ENCODE measurements at regions of chr17 and their contacts with region 1.

Region 1: DNA sequence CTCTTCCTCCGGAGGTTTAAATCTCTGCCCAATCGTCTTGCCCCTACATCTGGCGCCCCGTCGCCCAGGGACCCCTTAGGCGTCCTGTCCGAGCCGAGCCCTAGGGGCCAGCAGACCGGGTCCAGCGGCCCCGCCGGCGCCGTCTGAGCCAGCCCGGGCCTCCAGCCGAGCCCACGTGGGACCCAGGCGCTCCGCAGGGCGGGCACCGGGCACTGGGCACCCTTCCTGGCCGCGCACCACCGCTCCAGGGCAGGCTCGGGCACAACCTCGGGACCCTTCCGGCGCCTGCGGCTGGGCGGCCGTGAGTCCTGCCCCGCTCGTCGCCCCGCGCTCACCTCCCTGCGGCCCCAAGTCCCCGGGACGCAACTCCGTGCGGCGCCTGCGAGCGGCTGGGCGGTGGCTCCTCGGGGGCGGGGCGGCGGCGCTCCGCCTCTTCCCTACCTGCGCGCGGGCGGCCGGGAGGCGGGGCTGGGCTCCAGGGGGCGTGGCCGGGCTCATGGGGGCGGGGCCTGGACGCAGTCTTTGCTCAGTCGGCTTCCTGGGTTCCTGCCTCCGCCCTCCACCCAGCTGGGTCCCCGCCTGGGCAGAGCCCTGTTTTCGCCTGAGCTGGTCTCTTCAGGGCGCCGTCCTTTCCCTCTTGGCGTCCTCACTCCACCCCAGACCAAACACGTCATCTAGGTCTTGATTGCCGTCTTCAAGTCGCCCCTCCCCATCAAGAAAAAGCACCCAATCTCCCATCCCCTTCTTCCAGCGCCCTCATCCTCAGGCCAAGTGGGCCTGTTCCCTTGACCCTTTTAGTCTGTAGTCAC is at the start of gene RHBDF2:
- DNase-seq: no peak
- ATAC-seq: peak; percentile 85
- H3K4me3 ChIP-seq: peak within 1 kb of the TSS; percentile 89
- H3K27ac ChIP-seq: peak within 1 kb of the TSS; percentile 90
- H3K4me1 ChIP-seq: peaks cover 43% of the 10 kb centered on the region
- H3K27me3 ChIP-seq: no peaks in the 10 kb centered on the region
- CTCF ChIP-seq: no peak
- total RNA-seq, gene RHBDF2: 67.8 TPM

Region 2: GRCh38 chr17:76458580-76459490 is 42.4 kb before region 1 on chr17:
- CTCF ChIA-PET with region 1: interaction called, 8 read pairs
- POLR2A ChIA-PET with region 1: interaction called, 15 read pairs
- in situ Hi-C with region 1: no loop called
- intact Hi-C with region 1: loop called (anchors 1 kb)
- DNase-seq: no peak
- ATAC-seq: peak; percentile 95
- H3K4me3 ChIP-seq: no peak overlapping the region
- H3K27ac ChIP-seq: no peak overlapping the region
- H3K4me1 ChIP-seq: no peaks in the 10 kb centered on the region
- H3K27me3 ChIP-seq: no peaks in the 10 kb centered on the region
- CTCF ChIP-seq: peak; percentile 90

Region 3: DNA sequence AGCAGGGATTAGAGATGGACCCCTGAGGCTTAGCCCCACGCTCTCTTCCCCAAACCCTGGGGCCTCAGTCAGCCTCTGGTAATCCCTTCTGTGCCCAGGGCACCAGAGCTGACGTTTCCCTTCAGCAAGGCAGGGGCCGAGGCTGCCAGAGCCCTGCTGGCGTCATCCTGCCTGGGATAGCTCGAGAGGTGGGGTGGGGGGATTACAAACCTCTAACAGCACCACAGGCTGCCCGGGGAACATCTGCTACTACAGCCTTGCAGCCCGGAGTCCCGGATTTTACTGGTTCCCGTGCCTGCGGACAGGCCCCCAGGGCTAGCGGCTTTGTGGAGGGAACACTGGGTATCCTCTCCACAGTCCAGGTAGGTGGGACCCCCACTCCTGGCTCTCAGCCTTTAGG is 33.9 kb before region 1 on chr17 and contains the start of gene AANAT:
- CTCF ChIA-PET with region 1: interaction called, 10 read pairs
- POLR2A ChIA-PET with region 1: interaction called, 3 read pairs
- in situ Hi-C with region 1: no loop called
- intact Hi-C with region 1: loop called (anchors 1 kb)
- DNase-seq: no peak
- ATAC-seq: no peak
- H3K4me3 ChIP-seq: no peak within 1 kb of the TSS
- H3K27ac ChIP-seq: no peak within 1 kb of the TSS
- H3K4me1 ChIP-seq: peaks cover 5% of the 10 kb centered on the region; the same call in 1 of the 2 replicates
- H3K27me3 ChIP-seq: no peaks in the 10 kb centered on the region
- CTCF ChIP-seq: no peak
- total RNA-seq, gene AANAT: not detected

Measured in Panc1 (cell line).